Activated CD4-positive, alpha-beta memory T cell treated with anti-CD3 and anti-CD28 coated beads, Interleukin-2, amount 10 ng/mL, durations not matched to agents 7 days and 5 days (primary cell): ENCODE measurements at regions of chr3 and their contacts with region 1.

Region 1: GRCh38 chr3:39406368-39407258 is at the start of gene RPSA:
- DNase-seq: peak; percentile 98
- H3K4me3 Mint-ChIP-seq: peak within 1 kb of the TSS; percentile 85
- H3K27ac Mint-ChIP-seq: peak within 1 kb of the TSS; percentile 89
- H3K4me1 Mint-ChIP-seq: peaks cover 56% of the 10 kb centered on the region
- H3K27me3 Mint-ChIP-seq: no peaks in the 10 kb centered on the region
- total RNA-seq, gene RPSA: 1,345 to 1,384 TPM

Region 2: DNA sequence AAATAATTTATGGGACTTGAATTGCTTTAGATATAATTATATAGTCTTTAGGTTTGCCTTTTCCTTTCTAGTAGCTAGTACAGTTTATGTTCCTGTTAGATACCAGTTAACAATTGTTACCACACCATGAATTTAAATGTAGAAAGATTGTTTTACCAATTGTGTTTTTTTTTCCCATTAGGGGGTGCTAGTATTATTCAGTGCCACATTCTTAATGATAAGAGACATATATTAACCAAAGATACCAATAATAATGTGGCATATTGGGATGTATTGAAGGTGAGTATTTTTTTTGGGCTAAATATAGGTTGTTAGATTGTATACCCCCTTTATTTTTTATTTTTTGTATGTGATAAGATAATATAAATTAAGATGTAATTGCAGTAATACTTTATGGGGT is 327.1 kb before region 1 on chr3:
- CTCF ChIA-PET with region 1: no interaction called
- POLR2A ChIA-PET with region 1: no interaction called
- DNase-seq: no peak
- H3K4me3 Mint-ChIP-seq: no peak overlapping the region
- H3K27ac Mint-ChIP-seq: no peak overlapping the region
- H3K4me1 Mint-ChIP-seq: peaks cover 52% of the 10 kb centered on the region
- H3K27me3 Mint-ChIP-seq: no peaks in the 10 kb centered on the region

Region 3: DNA sequence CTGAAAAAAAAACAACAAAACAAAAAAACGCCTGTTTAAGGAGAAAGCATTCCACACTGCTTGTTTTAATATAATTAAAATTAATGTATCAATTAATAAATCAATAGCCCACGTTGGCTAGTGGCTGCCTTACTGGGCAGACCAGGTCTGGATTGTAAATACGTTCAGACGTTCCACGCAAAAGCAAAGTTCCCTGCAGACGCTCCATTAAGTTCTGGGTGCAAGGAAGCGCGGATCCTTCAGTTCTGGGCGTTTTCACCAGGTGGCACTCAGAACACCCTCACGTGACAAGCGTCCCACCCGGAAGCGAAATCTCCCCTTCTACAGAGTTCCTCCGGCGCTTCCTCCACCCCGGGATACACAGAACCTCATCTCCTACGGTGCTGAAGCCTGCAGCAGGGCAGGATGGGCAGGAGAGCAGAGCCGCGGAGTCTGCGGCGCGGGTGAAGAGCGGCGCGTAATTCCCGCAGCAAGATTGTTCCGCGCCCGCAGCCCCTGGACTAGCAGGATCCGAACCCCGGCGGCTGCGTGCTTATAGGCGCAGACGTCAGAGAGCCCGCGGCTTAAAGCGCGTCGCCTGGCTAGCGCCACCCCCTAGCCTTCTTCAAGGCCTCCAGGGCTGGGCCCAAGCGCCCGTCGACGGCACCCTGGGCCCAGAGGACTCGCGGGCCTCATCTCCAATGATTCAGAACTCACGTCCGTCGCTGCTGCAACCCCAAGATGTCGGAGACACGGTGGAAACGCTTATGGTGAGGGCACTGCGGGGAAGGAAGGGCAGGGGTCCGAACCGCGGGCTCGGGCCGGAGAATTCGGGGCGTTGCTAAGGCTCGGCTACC is 23.4 kb before region 1 on chr3 and contains the start of gene SLC25A38:
- CTCF ChIA-PET with region 1: interaction called, 11 read pairs
- POLR2A ChIA-PET with region 1: interaction called, 122 read pairs
- DNase-seq: peak; percentile 88
- H3K4me3 Mint-ChIP-seq: peak within 1 kb of the TSS; percentile 92
- H3K27ac Mint-ChIP-seq: peak within 1 kb of the TSS; percentile 99
- H3K4me1 Mint-ChIP-seq: peaks cover 56% of the 10 kb centered on the region
- H3K27me3 Mint-ChIP-seq: no peaks in the 10 kb centered on the region
- total RNA-seq, gene SLC25A38: 34.2 to 35.8 TPM

Region 4: DNA sequence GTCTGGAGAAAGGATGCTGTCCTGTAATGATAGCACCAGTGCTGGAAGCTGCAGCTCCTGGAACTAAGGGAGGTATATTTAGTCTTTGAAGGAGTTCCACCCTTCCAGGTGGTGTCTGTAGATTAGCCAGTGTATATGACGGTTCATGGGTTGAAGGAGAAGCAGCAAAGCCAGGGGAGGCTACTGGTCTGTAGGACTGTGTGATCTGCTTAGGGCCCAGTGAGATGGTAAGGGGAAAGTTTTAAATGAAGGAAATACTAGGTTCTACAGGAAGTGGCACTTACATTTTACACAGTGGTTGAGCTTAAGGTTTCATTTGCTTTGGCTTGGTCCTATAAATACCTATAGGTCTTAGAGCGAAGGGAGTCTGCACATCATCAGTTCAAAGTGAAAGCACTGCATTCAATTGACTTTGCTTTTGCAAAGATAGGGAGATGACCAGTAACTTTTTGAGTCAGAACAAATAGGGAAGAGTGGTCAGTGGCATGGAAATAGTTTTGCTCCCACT is 17.8 kb before region 1 on chr3:
- CTCF ChIA-PET with region 1: interaction called, 11 read pairs
- POLR2A ChIA-PET with region 1: interaction called, 122 read pairs
- DNase-seq: no peak
- H3K4me3 Mint-ChIP-seq: peak overlapping the region; percentile 48
- H3K27ac Mint-ChIP-seq: peak overlapping the region; percentile 81
- H3K4me1 Mint-ChIP-seq: peaks cover 75% of the 10 kb centered on the region
- H3K27me3 Mint-ChIP-seq: no peaks in the 10 kb centered on the region

Region 5: DNA sequence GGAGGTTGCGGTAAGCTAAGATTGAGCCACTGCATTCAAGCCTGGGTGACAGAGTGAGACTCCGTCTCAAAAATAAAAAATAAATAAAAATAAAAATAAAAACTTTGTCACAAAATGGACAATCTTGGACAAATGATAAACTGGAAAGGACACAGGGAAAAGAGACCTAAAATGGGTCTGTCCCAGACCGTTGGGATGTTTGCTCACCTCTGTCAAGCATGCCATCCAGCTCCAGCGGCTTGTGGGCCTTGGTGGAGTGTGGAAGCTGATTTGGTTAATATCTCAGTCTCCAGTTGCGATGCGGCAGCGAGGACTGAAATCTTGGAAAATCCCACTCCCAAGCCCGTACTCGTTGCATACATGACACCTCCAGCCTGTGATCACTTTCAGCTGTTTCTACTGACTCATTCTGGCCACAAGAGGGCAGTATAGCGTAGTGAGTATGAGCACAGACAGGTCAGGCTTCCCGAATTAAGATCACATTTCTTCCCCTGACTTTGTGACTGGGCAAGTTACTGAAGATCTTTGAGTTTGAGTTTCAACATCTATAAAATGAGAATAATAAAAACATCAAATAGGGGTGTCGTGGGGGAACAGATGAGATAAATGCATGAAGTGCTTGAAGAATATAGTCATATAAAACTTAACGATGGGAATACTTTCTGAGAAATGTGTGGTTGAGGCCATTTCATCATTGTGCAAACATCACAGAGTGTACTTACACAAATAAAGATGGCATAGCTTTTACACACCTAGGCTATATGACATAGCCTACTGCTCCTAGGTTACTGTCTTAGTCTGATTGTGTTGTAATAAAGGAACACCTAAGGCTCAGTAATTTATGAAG is 41.2 kb after region 1 on chr3:
- CTCF ChIA-PET with region 1: interaction called, 12 read pairs
- POLR2A ChIA-PET with region 1: interaction called, 3 read pairs
- DNase-seq: peak; percentile 60
- H3K4me3 Mint-ChIP-seq: no peak overlapping the region
- H3K27ac Mint-ChIP-seq: no peak overlapping the region
- H3K4me1 Mint-ChIP-seq: no peaks in the 10 kb centered on the region
- H3K27me3 Mint-ChIP-seq: peaks cover 10% of the 10 kb centered on the region